Activated CD4-positive, alpha-beta T cell treated with anti-CD3 and anti-CD28 coated beads for 36 hours (primary cell): ENCODE measurements at regions of chr7 and their contacts with region 1.

Region 1: DNA sequence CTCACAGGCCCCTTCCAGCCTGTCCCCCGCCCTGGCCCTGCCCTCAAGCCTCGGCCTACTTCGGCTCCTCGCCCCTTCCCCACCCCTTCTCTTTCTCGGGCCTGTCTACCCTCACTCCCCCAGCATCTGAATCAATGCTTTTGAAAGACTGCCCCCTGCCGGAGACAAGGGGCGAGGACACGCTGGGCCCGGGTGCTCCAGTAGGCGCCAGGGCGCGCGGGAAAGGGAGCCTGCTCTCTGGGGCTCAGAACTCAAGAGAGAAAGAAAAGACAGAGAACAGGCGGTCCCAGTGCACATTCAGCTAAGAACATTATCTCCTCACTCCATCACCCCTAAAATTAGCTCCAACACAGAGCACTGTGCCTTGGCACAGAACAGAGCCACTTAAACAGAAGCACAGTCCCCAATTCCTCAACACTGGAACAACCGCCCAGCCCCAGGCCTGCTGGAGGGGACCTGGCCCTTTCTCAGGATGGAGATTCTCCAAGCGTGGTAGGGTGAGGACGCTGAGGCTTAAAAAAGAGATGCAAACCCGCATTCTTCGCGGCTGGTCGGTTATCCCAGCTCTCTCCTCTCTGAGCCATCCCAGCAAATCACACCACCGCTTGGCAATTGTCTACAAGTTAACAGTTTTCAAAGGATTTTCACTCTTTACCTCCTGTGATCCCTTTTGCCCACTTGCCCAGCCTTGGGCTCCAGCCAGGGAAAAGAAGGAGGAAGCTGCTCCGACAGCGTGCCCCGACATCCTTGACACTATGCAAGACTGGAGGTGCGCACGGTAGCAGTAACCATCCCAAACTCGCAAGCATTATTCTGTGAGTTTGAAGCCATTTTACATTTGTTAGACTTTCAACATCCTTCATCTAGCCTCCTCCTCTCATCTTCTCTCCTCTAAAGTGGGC is 2.1 kb downstream of the GIGYF1 start:
- DNase-seq: peak; percentile 92
- ATAC-seq: peak; percentile 78
- H3K4me3 Mint-ChIP-seq: peak overlapping the region; percentile 89
- H3K27ac Mint-ChIP-seq: peak overlapping the region; percentile 88
- H3K4me1 Mint-ChIP-seq: peaks cover 48% of the 10 kb centered on the region
- H3K27me3 Mint-ChIP-seq: no peaks in the 10 kb centered on the region

Region 2: DNA sequence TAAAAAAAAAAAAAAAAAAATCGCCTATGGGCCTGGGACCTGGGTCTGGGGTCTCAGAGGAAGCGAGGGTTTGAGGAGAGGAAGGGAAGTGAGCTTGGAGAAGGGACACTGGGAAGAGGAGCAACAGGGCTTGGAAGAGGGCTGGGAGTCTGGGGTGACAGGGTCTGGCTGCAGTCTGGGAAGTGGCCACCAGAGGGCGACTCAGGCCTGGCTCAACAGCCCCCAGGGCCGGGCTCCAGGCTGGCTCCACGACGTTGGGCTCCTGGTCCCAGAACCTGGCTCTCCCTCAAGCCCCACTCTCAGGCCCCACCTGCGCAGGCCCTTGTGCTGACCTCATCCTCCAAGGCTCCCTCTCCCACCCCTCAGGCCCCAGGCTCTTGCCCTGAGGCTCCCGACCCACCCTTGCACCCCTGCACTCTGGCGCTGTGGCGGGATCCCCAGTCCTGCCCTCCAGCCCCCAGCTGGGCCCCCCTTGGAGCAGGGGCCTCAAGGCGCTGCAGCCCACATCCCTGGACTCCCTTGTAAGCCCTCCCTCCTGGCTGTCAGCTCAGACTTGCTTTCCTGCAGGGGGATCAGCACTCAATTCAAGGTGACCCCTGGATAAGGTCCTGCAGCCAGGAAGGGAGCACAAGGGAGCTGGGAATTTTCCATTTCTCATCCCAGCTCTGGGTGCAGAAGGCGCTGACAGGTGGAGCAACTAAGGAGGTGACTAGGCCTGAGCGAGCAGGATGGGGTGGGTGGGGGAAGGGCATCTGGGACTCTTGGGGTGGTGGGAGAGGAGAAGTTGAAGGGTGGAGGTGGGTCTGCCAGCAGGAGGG is 222.5 kb before region 1 on chr7:
- CTCF ChIA-PET with region 1: interaction called, 3 read pairs
- POLR2A ChIA-PET with region 1: no interaction called
- intact Hi-C with region 1: loop called in 1 of 2 experiments (anchors 10 kb)
- DNase-seq: peak; percentile 91
- ATAC-seq: peak; percentile 92
- H3K4me3 Mint-ChIP-seq: no peak overlapping the region
- H3K27ac Mint-ChIP-seq: no peak overlapping the region
- H3K4me1 Mint-ChIP-seq: peaks cover 31% of the 10 kb centered on the region
- H3K27me3 Mint-ChIP-seq: no peaks in the 10 kb centered on the region

Region 3: DNA sequence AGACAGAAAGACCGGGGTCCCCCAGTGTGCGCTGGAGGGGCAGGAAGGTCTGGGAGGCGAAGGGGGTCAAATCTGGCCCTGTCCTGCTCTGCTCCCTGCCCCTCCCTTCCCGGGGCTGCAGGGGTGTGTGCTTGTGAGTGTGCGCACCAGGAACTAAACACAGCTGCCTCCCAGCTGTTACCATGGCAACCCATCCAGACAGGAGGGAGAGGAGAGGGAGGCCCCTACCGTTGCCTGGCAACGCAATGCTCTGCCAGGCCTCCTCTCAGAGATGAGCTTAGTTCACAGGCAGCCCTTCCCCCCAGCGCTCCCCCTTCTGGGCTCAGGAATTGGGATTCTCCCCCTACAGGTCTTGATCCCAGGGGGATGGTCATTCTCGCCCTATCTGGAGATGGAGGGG is 202.1 kb before region 1 on chr7:
- CTCF ChIA-PET with region 1: interaction called, 3 read pairs
- POLR2A ChIA-PET with region 1: interaction called, 10 read pairs
- intact Hi-C with region 1: no loop called
- DNase-seq: peak; percentile 73
- ATAC-seq: peak; percentile 33
- H3K4me3 Mint-ChIP-seq: no peak overlapping the region
- H3K27ac Mint-ChIP-seq: no peak overlapping the region
- H3K4me1 Mint-ChIP-seq: peaks cover 11% of the 10 kb centered on the region
- H3K27me3 Mint-ChIP-seq: no peaks in the 10 kb centered on the region

Region 4: GRCh38 chr7:100604028-100604975 is 87.6 kb before region 1 on chr7:
- CTCF ChIA-PET with region 1: interaction called, 7 read pairs
- POLR2A ChIA-PET with region 1: no interaction called
- intact Hi-C with region 1: loop called in 1 of 2 experiments (anchors 1 kb)
- DNase-seq: peak; percentile 85
- ATAC-seq: peak; percentile 70
- H3K4me3 Mint-ChIP-seq: peak overlapping the region; percentile 78
- H3K27ac Mint-ChIP-seq: peak overlapping the region; percentile 82
- H3K4me1 Mint-ChIP-seq: peaks cover 15% of the 10 kb centered on the region
- H3K27me3 Mint-ChIP-seq: peaks cover 3% of the 10 kb centered on the region

Region 5: GRCh38 chr7:100632951-100633717 is 58.8 kb before region 1 on chr7:
- CTCF ChIA-PET with region 1: interaction called, 13 read pairs
- POLR2A ChIA-PET with region 1: no interaction called
- intact Hi-C with region 1: loop called (anchors 1 to 5 kb)
- DNase-seq: peak; percentile 80
- ATAC-seq: peak; percentile 75
- H3K4me3 Mint-ChIP-seq: peak overlapping the region; percentile 80
- H3K27ac Mint-ChIP-seq: peak overlapping the region; percentile 92
- H3K4me1 Mint-ChIP-seq: peaks cover 18% of the 10 kb centered on the region
- H3K27me3 Mint-ChIP-seq: no peaks in the 10 kb centered on the region

Region 6: GRCh38 chr7:100965723-100966541 is 274.0 kb after region 1 on chr7:
- CTCF ChIA-PET with region 1: no interaction called
- POLR2A ChIA-PET with region 1: no interaction called
- intact Hi-C with region 1: no loop called
- DNase-seq: peak; percentile 91
- ATAC-seq: peak; percentile 87
- H3K4me3 Mint-ChIP-seq: peak overlapping the region; percentile 26
- H3K27ac Mint-ChIP-seq: no peak overlapping the region
- H3K4me1 Mint-ChIP-seq: peaks cover 9% of the 10 kb centered on the region
- H3K27me3 Mint-ChIP-seq: peaks cover 48% of the 10 kb centered on the region